ENCODE measurements at regions of chr17 and their contacts with region 1.

Region 1: DNA sequence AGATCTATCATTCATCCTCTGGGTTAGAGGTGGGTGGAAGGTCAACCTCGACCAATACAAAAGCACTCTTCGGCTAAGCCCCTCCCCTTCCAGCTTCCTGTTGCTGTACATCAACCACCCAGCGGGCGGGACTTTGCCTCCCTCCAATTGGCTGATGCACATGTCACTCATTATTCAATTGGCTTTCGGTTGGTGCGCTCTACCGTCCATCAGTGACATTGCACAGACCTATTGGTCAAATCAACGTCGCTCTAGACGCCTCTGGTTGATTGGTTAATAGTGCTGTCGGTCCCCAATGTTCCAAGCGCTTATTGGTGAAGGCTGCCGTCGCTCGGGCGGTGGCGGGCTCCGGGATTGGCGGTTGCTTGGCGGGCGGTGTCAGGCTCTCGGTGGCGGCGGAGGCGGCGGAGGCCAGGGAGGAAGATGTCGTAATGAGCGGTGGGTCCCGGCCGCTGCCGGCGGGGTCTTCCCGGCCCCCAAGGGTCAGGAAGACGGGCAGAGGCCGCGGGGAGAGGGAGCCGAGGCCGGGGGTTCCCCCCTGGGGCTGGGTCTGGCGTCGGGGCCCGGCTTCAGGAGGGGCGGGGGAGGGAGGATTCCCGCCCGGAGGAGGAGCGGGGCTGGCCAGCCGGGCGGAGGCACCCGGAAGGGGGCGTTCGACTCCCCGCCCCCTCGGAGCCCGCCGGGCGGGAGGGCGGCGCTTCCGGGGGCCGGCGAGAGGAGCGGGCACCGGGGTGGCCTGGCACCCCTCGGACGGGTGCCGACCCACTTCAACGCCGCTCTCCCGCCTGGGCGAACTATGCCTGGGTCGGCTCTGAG is at the start of gene SP2:
- DNase-seq: peak; percentile 100
- H3K4me3 ChIP-seq: peak within 1 kb of the TSS; percentile 90 to 99 (median 92)
- H3K4me3 Mint-ChIP-seq: peak within 1 kb of the TSS; percentile 91 to 95
- H3K27ac ChIP-seq: peak within 1 kb of the TSS; percentile 69 to 95
- H3K27ac Mint-ChIP-seq: peak within 1 kb of the TSS; percentile 85 to 97 (median 95)
- H3K4me1 ChIP-seq: peaks cover 28 to 53% of the 10 kb centered on the region in 2 donors
- H3K4me1 Mint-ChIP-seq: peaks cover 45% of the 10 kb centered on the region
- H3K27me3 ChIP-seq: no peaks in the 10 kb centered on the region
- H3K27me3 Mint-ChIP-seq: no peaks in the 10 kb centered on the region
- CTCF ChIP-seq: no peak
- polyA plus RNA-seq, gene SP2: 3.1 to 26.7 (median 6.8) TPM

Region 2: DNA sequence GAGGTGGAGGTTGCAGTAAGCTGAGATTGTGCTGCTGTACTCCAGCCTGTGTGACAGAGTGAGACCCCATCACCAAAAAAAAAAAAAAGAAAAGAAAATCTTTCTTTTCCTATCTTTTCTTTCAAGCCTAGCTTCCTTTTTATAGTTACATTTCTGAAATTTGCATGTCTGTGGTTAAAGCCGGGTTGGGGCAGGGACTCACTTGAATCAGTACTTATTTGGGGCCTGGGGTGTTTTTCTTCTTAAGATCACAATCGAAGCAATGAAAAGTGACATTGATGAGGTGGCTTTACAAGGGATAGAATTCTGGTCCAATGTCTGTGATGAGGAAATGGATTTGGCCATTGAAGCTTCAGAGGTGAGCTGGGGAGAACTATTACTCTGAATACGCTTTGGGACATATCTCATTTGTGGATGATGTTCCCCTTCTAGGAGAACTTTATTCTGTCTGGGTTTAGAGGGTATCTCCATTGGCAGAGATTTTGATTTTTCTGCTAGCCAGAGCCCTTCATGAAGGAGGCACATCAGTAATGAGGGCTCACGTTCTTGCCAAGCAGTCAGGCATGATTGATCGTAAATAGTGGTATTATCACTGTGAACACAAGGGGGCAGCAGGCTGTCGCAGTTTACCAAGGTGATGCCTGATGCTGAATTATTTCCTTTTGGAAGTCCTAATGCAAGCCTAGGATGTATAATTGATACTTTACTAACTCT is 232.0 kb before region 1 on chr17:
- intact Hi-C with region 1: loop called in 1 of 2 experiments (anchors 10 kb)
- DNase-seq: peak; percentile 35 to 60 (median 53)
- H3K4me3 ChIP-seq: no peak overlapping the region
- H3K4me3 Mint-ChIP-seq: no peak overlapping the region
- H3K27ac ChIP-seq: peak overlapping the region in 1 of 2 donors; percentile 73
- H3K27ac Mint-ChIP-seq: peak overlapping the region; percentile 51 to 86 (median 83)
- H3K4me1 ChIP-seq: peaks cover 44 to 58% of the 10 kb centered on the region in 2 donors
- H3K4me1 Mint-ChIP-seq: peaks cover 41% of the 10 kb centered on the region
- H3K27me3 ChIP-seq: no peaks in the 10 kb centered on the region
- H3K27me3 Mint-ChIP-seq: peaks cover 0 to 2% (median 0%) of the 10 kb centered on the region in 3 donors
- CTCF ChIP-seq: peak; percentile 90

Region 3: GRCh38 chr17:47725446-47726111 is 170.5 kb before region 1 on chr17:
- intact Hi-C with region 1: no loop called
- DNase-seq: no peak
- H3K4me3 ChIP-seq: no peak overlapping the region
- H3K4me3 Mint-ChIP-seq: no peak overlapping the region
- H3K27ac ChIP-seq: no peak overlapping the region
- H3K27ac Mint-ChIP-seq: no peak overlapping the region
- H3K4me1 ChIP-seq: no peaks in the 10 kb centered on the region
- H3K4me1 Mint-ChIP-seq: peaks cover 3% of the 10 kb centered on the region
- H3K27me3 ChIP-seq: peaks cover 9 to 32% of the 10 kb centered on the region in 2 donors
- H3K27me3 Mint-ChIP-seq: peaks cover 37 to 61% (median 42%) of the 10 kb centered on the region in 3 donors
- CTCF ChIP-seq: no peak

Region 4: DNA sequence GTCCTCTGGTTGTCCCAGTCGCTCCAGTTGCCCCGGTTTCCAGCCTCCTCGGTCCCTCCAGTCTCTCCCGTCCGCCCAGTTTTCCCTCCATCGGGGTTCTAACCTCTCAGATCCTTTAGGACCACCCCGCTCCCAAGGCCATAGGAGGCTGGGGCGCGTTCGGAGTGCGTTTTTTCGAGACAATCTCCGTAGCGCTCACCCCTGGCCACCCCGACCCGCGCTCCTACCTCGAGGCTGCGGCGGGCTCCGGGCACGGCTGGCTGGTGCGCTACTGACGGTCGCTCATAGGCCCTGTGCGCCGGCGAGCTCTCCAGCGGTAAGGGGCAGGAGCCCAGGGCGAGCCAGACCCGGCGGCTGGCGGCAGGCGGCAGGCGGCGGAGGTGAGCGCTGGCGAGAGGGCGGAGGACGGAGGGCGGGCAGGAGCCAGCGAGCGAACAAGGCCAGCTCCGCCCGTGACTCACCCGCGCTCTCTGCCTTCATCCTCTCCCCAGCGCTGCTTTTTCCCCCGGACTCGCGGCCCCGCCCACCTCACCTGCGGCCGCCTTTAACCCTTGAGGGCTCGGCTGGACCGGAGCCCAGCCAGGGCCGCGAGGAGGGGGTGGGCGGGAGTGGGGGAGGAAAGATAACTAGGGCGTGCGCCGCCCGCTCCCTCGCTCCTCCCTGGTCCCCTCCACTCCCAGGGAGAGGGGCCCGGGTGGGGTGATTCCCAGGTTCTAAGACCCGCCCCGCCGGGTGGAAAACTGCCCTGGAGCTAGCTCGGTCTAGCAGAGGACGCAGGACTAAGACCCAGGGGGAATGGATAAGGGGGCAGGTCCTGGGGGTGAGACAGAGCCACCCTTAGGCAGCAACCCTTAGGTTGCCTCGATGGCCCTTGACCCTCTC is 45.1 kb before region 1 on chr17 and contains the start of gene SP6:
- intact Hi-C with region 1: no loop called
- DNase-seq: peak in 1 of 3 donors; percentile 23
- H3K4me3 ChIP-seq: no peak within 1 kb of the TSS
- H3K4me3 Mint-ChIP-seq: peak within 1 kb of the TSS in 1 of 2 donors; percentile 84
- H3K27ac ChIP-seq: no peak within 1 kb of the TSS
- H3K27ac Mint-ChIP-seq: no peak within 1 kb of the TSS
- H3K4me1 ChIP-seq: peaks cover 0 to 11% of the 10 kb centered on the region in 2 donors
- H3K4me1 Mint-ChIP-seq: peaks cover 15% of the 10 kb centered on the region
- H3K27me3 ChIP-seq: peaks cover 75 to 99% of the 10 kb centered on the region in 2 donors
- H3K27me3 Mint-ChIP-seq: peaks cover 89 to 99% (median 93%) of the 10 kb centered on the region in 3 donors
- CTCF ChIP-seq: no peak
- polyA plus RNA-seq, gene SP6: 0.06 TPM in 1 of 3 donors, not detected in the others

Region 5: GRCh38 chr17:47929218-47930000 is 33.3 kb after region 1 on chr17:
- intact Hi-C with region 1: no loop called
- DNase-seq: no peak
- H3K4me3 ChIP-seq: no peak overlapping the region
- H3K4me3 Mint-ChIP-seq: no peak overlapping the region
- H3K27ac ChIP-seq: no peak overlapping the region
- H3K27ac Mint-ChIP-seq: peak overlapping the region in 1 of 7 donors; percentile 26
- H3K4me1 ChIP-seq: no peaks in the 10 kb centered on the region
- H3K4me1 Mint-ChIP-seq: peaks cover 3% of the 10 kb centered on the region
- H3K27me3 ChIP-seq: no peaks in the 10 kb centered on the region
- H3K27me3 Mint-ChIP-seq: peaks cover 0 to 2% (median 2%) of the 10 kb centered on the region in 3 donors
- CTCF ChIP-seq: no peak

Region 6: GRCh38 chr17:47941236-47941994 is 45.4 kb after region 1 on chr17 and contains the start of gene PNPO:
- intact Hi-C with region 1: loop called (anchors 2 to 10 kb)
- DNase-seq: peak; percentile 94 to 98 (median 95)
- H3K4me3 ChIP-seq: peak within 1 kb of the TSS; percentile 74 to 89 (median 78)
- H3K4me3 Mint-ChIP-seq: peak within 1 kb of the TSS; percentile 81 to 93
- H3K27ac ChIP-seq: peak within 1 kb of the TSS; percentile 49 to 82
- H3K27ac Mint-ChIP-seq: peak within 1 kb of the TSS; percentile 81 to 91 (median 87)
- H3K4me1 ChIP-seq: peaks cover 41 to 55% of the 10 kb centered on the region in 2 donors
- H3K4me1 Mint-ChIP-seq: peaks cover 57% of the 10 kb centered on the region
- H3K27me3 ChIP-seq: no peaks in the 10 kb centered on the region
- H3K27me3 Mint-ChIP-seq: peaks cover 0 to 4% (median 0%) of the 10 kb centered on the region in 3 donors
- CTCF ChIP-seq: no peak
- polyA plus RNA-seq, gene PNPO: 13.2 to 34.2 (median 29.7) TPM

Region 7: GRCh38 chr17:47970704-47971463 is 74.8 kb after region 1 on chr17 and contains the start of gene CDK5RAP3:
- intact Hi-C with region 1: loop called in 1 of 2 experiments (anchors 1 kb)
- DNase-seq: peak; percentile 98 to 100 (median 99)
- H3K4me3 ChIP-seq: peak within 1 kb of the TSS; percentile 63 to 99 (median 98)
- H3K4me3 Mint-ChIP-seq: peak within 1 kb of the TSS; percentile 91 to 94
- H3K27ac ChIP-seq: peak within 1 kb of the TSS; percentile 43 to 85
- H3K27ac Mint-ChIP-seq: peak within 1 kb of the TSS; percentile 75 to 95 (median 88)
- H3K4me1 ChIP-seq: peaks cover 20 to 22% of the 10 kb centered on the region in 2 donors
- H3K4me1 Mint-ChIP-seq: peaks cover 23% of the 10 kb centered on the region
- H3K27me3 ChIP-seq: no peaks in the 10 kb centered on the region
- H3K27me3 Mint-ChIP-seq: peaks cover 2% of the 10 kb centered on the region in 3 donors
- CTCF ChIP-seq: peak; percentile 97
- polyA plus RNA-seq, gene CDK5RAP3: 86.1 to 782 (median 94.4) TPM

Region 8: DNA sequence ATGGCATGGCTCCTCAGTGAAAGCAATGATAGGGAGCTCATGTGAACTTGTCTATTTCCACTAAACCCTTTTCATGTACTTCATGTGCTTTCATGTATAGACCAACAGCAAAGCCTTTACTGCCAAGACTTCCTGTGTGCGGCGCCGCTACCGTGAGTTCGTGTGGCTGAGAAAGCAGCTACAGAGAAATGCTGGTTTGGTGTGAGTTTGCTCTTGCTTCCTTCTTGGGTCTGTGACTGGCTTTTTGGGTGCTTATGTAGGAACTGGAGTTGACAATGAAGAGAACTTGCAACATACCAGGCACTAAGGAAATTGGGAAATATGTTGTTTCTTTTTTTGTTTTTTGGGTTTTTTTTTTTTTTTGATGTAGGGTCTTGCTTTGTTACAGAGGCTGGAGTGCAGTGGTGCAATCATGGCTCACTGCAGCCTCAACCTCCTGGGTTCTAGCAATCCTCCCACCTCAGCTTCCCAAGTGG is 217.2 kb after region 1 on chr17:
- intact Hi-C with region 1: loop called in 1 of 2 experiments (anchors 5 kb)
- DNase-seq: peak; percentile 72 to 86 (median 85)
- H3K4me3 ChIP-seq: peak overlapping the region in 1 of 3 experiments; percentile 41
- H3K4me3 Mint-ChIP-seq: peak overlapping the region; percentile 51 to 58
- H3K27ac ChIP-seq: peak overlapping the region; percentile 78 to 83
- H3K27ac Mint-ChIP-seq: peak overlapping the region; percentile 86 to 95 (median 92)
- H3K4me1 ChIP-seq: peaks cover 69 to 76% of the 10 kb centered on the region in 2 donors
- H3K4me1 Mint-ChIP-seq: peaks cover 72% of the 10 kb centered on the region
- H3K27me3 ChIP-seq: no peaks in the 10 kb centered on the region
- H3K27me3 Mint-ChIP-seq: peaks cover 0 to 2% (median 0%) of the 10 kb centered on the region in 3 donors
- CTCF ChIP-seq: no peak

Measured in CD14-positive monocyte (primary cell).